ENCODE measurements at regions of chr20 and their contacts with region 1.

Region 1: GRCh38 chr20:22684072-22684762 is 99.8 kb upstream of the FOXA2 start:
- DNase-seq: peak; percentile 81 to 86
- H3K4me3 ChIP-seq: no peak overlapping the region
- H3K4me3 Mint-ChIP-seq: no peak overlapping the region
- H3K27ac Mint-ChIP-seq: peak overlapping the region; percentile 32
- H3K4me1 ChIP-seq: peaks cover 23% of the 10 kb centered on the region
- H3K4me1 Mint-ChIP-seq: peaks cover 20% of the 10 kb centered on the region
- H3K27me3 ChIP-seq: no peaks in the 10 kb centered on the region
- H3K27me3 Mint-ChIP-seq: no peaks in the 10 kb centered on the region
- CTCF ChIP-seq: peak; percentile 89

Region 2: GRCh38 chr20:22333885-22334545 is 350.2 kb before region 1 on chr20:
- CTCF ChIA-PET with region 1: interaction called, 64 read pairs
- POLR2A ChIA-PET with region 1: interaction called, 11 read pairs
- intact Hi-C with region 1: loop called (anchors 1 kb)
- DNase-seq: peak; percentile 69 to 78
- H3K4me3 ChIP-seq: no peak overlapping the region
- H3K4me3 Mint-ChIP-seq: no peak overlapping the region
- H3K27ac Mint-ChIP-seq: no peak overlapping the region
- H3K4me1 ChIP-seq: no peaks in the 10 kb centered on the region; the same call in 1 of the 2 replicates
- H3K4me1 Mint-ChIP-seq: peaks cover 2% of the 10 kb centered on the region
- H3K27me3 ChIP-seq: peaks cover 1% of the 10 kb centered on the region; the same call in 1 of the 2 replicates
- H3K27me3 Mint-ChIP-seq: peaks cover 28% of the 10 kb centered on the region
- CTCF ChIP-seq: peak; percentile 84 to 86

Region 3: GRCh38 chr20:22339091-22339881 is 344.9 kb before region 1 on chr20:
- CTCF ChIA-PET with region 1: interaction called, 64 read pairs
- POLR2A ChIA-PET with region 1: interaction called, 11 read pairs
- intact Hi-C with region 1: loop called (anchors 1 kb)
- DNase-seq: peak; percentile 67 to 82
- H3K4me3 ChIP-seq: no peak overlapping the region
- H3K4me3 Mint-ChIP-seq: peak overlapping the region; percentile 46
- H3K27ac Mint-ChIP-seq: peak overlapping the region; percentile 32
- H3K4me1 ChIP-seq: no peaks in the 10 kb centered on the region
- H3K4me1 Mint-ChIP-seq: peaks cover 12% of the 10 kb centered on the region
- H3K27me3 ChIP-seq: no peaks in the 10 kb centered on the region
- H3K27me3 Mint-ChIP-seq: no peaks in the 10 kb centered on the region
- CTCF ChIP-seq: peak; percentile 80 to 83

Region 4: GRCh38 chr20:22385602-22386305 is 298.5 kb before region 1 on chr20:
- CTCF ChIA-PET with region 1: interaction called, 3 read pairs
- POLR2A ChIA-PET with region 1: no interaction called
- intact Hi-C with region 1: loop called (anchors 1 kb)
- DNase-seq: peak in 1 of 2 experiments; percentile 51
- H3K4me3 ChIP-seq: no peak overlapping the region
- H3K4me3 Mint-ChIP-seq: no peak overlapping the region
- H3K27ac Mint-ChIP-seq: no peak overlapping the region
- H3K4me1 ChIP-seq: no peaks in the 10 kb centered on the region
- H3K4me1 Mint-ChIP-seq: peaks cover 7% of the 10 kb centered on the region
- H3K27me3 ChIP-seq: no peaks in the 10 kb centered on the region
- H3K27me3 Mint-ChIP-seq: no peaks in the 10 kb centered on the region
- CTCF ChIP-seq: peak; percentile 41 to 55

Region 5: DNA sequence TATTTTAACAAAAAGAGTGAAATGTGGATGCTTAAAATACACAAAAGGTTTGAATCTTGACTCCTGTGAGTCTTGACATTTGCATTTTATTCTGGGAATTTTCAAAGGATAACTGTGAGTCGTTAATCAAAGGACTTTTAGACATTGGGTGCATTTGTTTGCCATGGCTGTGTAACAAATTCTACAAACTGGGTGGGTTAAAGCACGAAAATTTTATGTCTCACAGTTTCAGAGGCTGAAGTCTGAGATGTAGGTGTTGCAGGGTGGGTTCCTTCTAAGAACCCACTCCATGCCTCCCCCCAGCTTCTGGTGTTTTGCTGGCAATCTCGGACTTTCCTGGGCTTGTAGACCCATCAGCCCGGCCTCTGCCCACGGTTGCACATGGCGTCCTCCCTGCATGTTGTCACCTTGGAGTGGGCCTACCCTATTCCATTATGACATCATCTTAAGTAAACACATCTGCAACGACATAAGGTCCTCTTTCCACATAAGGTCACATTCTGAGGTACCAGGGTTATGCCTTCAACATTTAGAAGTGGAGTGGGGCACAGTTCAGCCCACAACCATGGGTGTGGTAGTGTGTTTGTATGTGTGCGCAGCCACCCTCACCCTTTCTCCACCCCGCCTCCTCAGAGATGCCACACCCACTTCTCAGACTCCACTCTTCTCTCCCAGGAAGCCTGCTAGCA is 212.9 kb before region 1 on chr20:
- CTCF ChIA-PET with region 1: no interaction called
- POLR2A ChIA-PET with region 1: no interaction called
- intact Hi-C with region 1: loop called (anchors 5 kb)
- DNase-seq: peak in 1 of 2 experiments; percentile 29
- H3K4me3 ChIP-seq: no peak overlapping the region
- H3K4me3 Mint-ChIP-seq: no peak overlapping the region
- H3K27ac Mint-ChIP-seq: peak overlapping the region; percentile 28
- H3K4me1 ChIP-seq: peaks cover 17% of the 10 kb centered on the region
- H3K4me1 Mint-ChIP-seq: peaks cover 11% of the 10 kb centered on the region
- H3K27me3 ChIP-seq: no peaks in the 10 kb centered on the region
- H3K27me3 Mint-ChIP-seq: no peaks in the 10 kb centered on the region
- CTCF ChIP-seq: no peak

Region 6: DNA sequence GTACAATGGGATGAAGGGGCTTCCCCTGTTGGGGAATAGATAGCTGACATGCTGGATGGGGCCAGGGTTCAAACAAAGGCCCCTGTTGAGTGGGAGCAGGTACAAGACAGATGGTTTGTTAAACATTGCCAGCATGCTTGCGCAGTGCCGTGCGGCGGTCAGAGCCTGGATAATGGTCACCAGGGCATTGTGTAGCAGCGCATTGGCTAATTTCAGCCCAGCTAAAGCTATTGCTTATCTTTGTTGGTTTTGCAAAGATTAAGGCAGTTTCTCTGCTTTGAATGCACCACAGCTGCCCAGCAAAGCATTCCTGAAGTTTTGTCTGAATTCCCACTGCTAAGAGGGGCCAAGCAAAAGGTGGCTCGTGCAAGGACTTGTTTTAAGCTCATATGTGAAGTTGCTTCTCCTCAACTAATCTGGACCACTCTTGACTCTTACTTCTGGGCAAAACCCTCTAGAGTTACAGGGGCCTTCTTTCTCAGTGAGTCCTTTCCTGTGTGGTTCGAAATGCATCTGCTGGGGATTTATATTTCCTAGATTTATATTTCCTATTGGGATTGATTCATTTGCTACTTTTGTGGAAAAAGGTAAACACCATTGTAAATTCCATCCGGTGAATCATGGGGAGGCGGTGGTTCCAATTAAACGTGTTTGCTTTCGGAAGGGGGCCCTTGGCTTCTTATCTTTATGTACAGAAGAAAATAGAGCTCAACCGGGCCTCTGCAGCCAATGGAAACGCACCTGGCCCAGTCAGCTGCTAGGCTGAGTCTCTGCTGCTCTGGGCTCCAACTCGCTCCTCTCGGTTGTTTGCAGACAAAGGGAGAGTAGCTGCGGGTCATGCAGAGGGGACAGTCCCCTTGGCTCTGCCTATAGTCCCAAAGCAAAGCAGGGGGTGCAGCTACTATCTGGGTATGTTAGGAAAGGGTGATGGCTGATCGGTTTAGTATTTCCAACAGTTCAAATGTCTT is 172.0 kb before region 1 on chr20:
- CTCF ChIA-PET with region 1: interaction called, 3 read pairs
- POLR2A ChIA-PET with region 1: interaction called, 3 read pairs
- intact Hi-C with region 1: loop called (anchors 1 kb)
- DNase-seq: peak; percentile 92 to 96
- H3K4me3 ChIP-seq: no peak overlapping the region
- H3K4me3 Mint-ChIP-seq: peak overlapping the region; percentile 35
- H3K27ac Mint-ChIP-seq: peak overlapping the region; percentile 50
- H3K4me1 ChIP-seq: peaks cover 71% of the 10 kb centered on the region
- H3K4me1 Mint-ChIP-seq: peaks cover 65% of the 10 kb centered on the region
- H3K27me3 ChIP-seq: no peaks in the 10 kb centered on the region
- H3K27me3 Mint-ChIP-seq: no peaks in the 10 kb centered on the region
- CTCF ChIP-seq: no peak

Measured in Caco-2 (cell line).